ENCODE measurements at regions of chr18 and their contacts with region 1.

Region 1: GRCh38 chr18:21163647-21164547 is 52.3 kb upstream of the ROCK1 start:
- DNase-seq: peak in 1 of 2 experiments; percentile 4
- ATAC-seq: no peak
- H3K4me3 ChIP-seq: no peak overlapping the region
- H3K27ac ChIP-seq: 0 out of 6 replicates have a peak overlapping the region, but pooled peaks of 1 of the 2 experiments have one; percentile 8
- H3K4me1 ChIP-seq: peaks cover 14% of the 10 kb centered on the region
- CTCF ChIP-seq: no peak
- EP300 ChIP-seq: no peak
- POLR2A ChIP-seq: no peak
- RAD21 ChIP-seq: no peak

Region 2: GRCh38 chr18:21179590-21180220 is 15.8 kb after region 1 on chr18:
- CTCF ChIA-PET with region 1: interaction called, 16 read pairs
- POLR2A ChIA-PET with region 1: no interaction called
- DNase-seq: peak; percentile 25 to 52
- ATAC-seq: peak in 1 of 2 experiments; percentile 71; a peak in 3 of 6 replicates
- H3K4me3 ChIP-seq: no peak overlapping the region
- H3K27ac ChIP-seq: no peak overlapping the region
- H3K4me1 ChIP-seq: no peaks in the 10 kb centered on the region
- CTCF ChIP-seq: peak; percentile 62
- EP300 ChIP-seq: no peak
- POLR2A ChIP-seq: no peak
- RAD21 ChIP-seq: peak; percentile 70 to 71

Measured in A549 (cell line).